ENCODE measurements at regions of chr2 and their contacts with region 1.

Region 1: DNA sequence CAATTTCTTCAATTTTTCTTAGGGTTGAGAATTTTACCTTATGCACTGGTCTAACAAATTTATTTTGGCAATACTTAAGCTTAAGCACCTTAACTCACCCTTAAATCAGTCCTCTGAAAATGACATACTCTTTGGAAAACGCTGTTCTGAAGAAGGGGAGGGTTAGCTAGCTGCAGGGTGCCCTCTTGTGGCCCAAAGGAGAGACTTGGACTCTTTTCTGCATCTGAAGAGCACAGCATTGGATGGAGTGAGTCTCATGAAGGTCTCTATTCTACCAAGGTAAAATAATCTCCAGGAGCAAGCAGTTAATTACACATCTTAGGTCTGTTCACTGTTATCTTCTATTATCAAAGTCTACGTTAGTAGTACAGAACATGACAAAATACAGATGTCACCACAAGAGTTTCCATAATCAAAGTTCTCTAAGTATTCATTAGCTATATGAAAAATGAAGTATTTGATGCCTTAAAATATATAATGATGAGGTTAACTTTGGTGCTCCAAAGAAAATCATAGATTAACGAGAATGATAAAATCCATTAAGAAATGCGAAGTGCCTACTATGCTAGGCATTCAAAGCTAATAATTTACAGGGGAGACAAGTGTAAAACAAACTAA is 24.4 kb downstream of the PUM2 start:
- DNase-seq: peak; percentile 24
- ATAC-seq: peak; percentile 98
- H3K4me3 ChIP-seq: no peak overlapping the region
- H3K27ac ChIP-seq: no peak overlapping the region
- H3K4me1 ChIP-seq: no peaks in the 10 kb centered on the region
- H3K27me3 ChIP-seq: no peaks in the 10 kb centered on the region
- CTCF ChIP-seq: peak; percentile 69 to 88 (median 85)
- POLR2A ChIP-seq: no peak
- RAD21 ChIP-seq: peak; percentile 68

Region 2: GRCh38 chr2:20313659-20314058 is 12.6 kb before region 1 on chr2:
- CTCF ChIA-PET with region 1: interaction called, 11 read pairs
- POLR2A ChIA-PET with region 1: no interaction called
- RAD21 ChIA-PET with region 1: no interaction called
- intact Hi-C with region 1: no loop called
- DNase-seq: no peak
- ATAC-seq: peak; percentile 49; the same call in 1 of the 2 replicates
- H3K4me3 ChIP-seq: no peak overlapping the region
- H3K27ac ChIP-seq: no peak overlapping the region
- H3K4me1 ChIP-seq: no peaks in the 10 kb centered on the region
- H3K27me3 ChIP-seq: no peaks in the 10 kb centered on the region
- CTCF ChIP-seq: no peak
- POLR2A ChIP-seq: no peak
- RAD21 ChIP-seq: no peak

Measured in HCT116 (cell line).